Activated B cell treated with CpG ODN at 0.5 μM for 24 hours (primary cell): ENCODE measurements at regions of chr9 and their contacts with region 1.

Region 1: GRCh38 chr9:16515879-16516301 is 354.6 kb downstream of the BNC2 start:
- DNase-seq: no peak
- ATAC-seq: no peak
- H3K4me3 Mint-ChIP-seq: no peak overlapping the region
- H3K27ac Mint-ChIP-seq: no peak overlapping the region
- H3K4me1 Mint-ChIP-seq: no peaks in the 10 kb centered on the region
- H3K27me3 Mint-ChIP-seq: no peaks in the 10 kb centered on the region
- CTCF ChIP-seq: no peak

Region 2: DNA sequence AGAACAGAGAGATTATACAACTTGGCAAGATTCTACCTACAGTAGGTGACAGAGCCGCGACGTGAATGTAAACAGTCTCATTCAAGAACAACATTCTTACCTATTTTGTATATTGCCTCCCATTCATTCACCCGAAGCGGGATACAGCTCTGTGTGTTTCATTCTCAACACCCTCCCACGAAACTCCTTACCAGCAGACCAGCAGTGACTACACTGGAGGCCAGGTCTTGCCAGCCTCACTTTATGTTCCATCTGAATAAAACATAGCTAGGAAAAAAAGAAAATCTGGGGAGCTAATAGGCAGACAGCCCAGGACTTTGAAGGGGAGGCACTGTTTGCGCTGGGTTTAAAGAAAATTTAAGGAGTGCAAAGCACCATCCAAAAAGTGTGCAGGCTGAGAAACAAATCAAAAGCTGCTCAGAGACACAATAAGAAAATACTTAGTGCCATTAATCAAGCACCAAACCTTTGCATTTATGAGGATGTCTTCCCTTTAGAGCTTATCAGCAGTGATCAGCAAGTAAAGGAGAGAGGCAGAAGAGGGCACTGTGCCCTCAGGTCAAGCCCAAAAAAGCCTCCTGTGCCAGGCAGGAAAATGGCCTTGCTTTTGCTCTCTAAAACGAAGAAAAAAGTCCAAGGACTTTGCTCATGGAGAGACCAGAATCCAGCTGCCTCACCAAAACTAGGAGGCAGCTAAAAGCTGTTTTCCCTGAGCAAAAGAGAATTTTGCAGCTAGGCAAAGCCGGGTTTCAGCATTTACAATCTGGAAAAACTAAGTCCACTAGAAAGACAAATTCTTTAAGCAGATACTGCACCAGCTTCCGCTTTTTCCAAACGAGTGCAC is 59.5 kb after region 1 on chr9:
- CTCF ChIA-PET with region 1: no interaction called
- POLR2A ChIA-PET with region 1: no interaction called
- intact Hi-C with region 1: loop called (anchors 10 kb)
- DNase-seq: no peak
- ATAC-seq: no peak
- H3K4me3 Mint-ChIP-seq: no peak overlapping the region
- H3K27ac Mint-ChIP-seq: no peak overlapping the region
- H3K4me1 Mint-ChIP-seq: no peaks in the 10 kb centered on the region
- H3K27me3 Mint-ChIP-seq: no peaks in the 10 kb centered on the region
- CTCF ChIP-seq: no peak